ENCODE measurements at regions of chr22 and their contacts with region 1.

Region 1: GRCh38 chr22:43884600-43885325 is 7.0 kb downstream of the PNPLA5 start:
- DNase-seq: no peak
- ATAC-seq: peak; percentile 79
- H3K4me3 ChIP-seq: no peak overlapping the region
- H3K27ac ChIP-seq: no peak overlapping the region
- H3K4me1 ChIP-seq: peaks cover 0 to 7% of the 10 kb centered on the region in 2 experiments; a peak in 1 of 4 replicates
- H3K27me3 ChIP-seq: no peaks in the 10 kb centered on the region
- CTCF ChIP-seq: peak; percentile 47 to 97 (median 85); a peak in 5 of 6 replicates
- POLR2A ChIP-seq: no peak
- RAD21 ChIP-seq: peak; percentile 51

Region 2: DNA sequence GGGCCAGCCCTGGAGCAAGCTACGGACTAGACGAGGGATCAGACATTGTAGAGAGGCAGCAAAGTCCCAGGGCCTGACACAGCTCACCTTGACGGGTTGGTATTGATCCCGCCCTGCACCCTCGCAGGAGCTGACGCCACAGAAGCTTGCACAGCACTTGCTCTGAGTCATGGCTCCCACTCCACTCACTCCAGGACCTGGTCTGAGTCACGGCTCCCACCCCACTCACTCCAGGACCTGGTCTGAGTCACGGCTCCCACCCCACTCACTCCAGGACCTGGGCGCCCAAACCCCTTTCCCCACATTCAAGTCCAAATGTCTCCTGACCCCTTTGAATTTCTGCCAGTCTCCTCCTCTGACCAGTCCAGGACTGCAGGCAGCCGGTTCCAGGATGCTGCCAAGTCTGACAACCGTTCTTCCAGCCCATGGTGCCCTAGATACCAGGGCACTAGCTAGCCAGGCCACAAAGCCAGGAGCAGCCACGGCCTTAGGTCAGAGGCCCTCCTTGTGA is 13.0 kb after region 1 on chr22:
- CTCF ChIA-PET with region 1: interaction called, 34 read pairs
- POLR2A ChIA-PET with region 1: interaction called, 6 read pairs
- RAD21 ChIA-PET with region 1: no interaction called
- intact Hi-C with region 1: no loop called
- DNase-seq: no peak
- ATAC-seq: peak; percentile 74
- H3K4me3 ChIP-seq: no peak overlapping the region
- H3K27ac ChIP-seq: no peak overlapping the region
- H3K4me1 ChIP-seq: peaks cover 2 to 12% of the 10 kb centered on the region in 2 experiments; a peak in 3 of 4 replicates
- H3K27me3 ChIP-seq: no peaks in the 10 kb centered on the region
- CTCF ChIP-seq: no peak
- POLR2A ChIP-seq: no peak
- RAD21 ChIP-seq: no peak

Region 3: GRCh38 chr22:43945632-43946383 is 61.0 kb after region 1 on chr22:
- CTCF ChIA-PET with region 1: interaction called, 64 read pairs
- POLR2A ChIA-PET with region 1: interaction called, 4 read pairs
- RAD21 ChIA-PET with region 1: interaction called, 9 to 14 read pairs
- intact Hi-C with region 1: loop called (anchors 1 kb)
- DNase-seq: peak; percentile 41
- ATAC-seq: peak; percentile 99
- H3K4me3 ChIP-seq: no peak overlapping the region
- H3K27ac ChIP-seq: no peak overlapping the region
- H3K4me1 ChIP-seq: peaks cover 0 to 7% of the 10 kb centered on the region in 2 experiments; a peak in 2 of 4 replicates
- H3K27me3 ChIP-seq: no peaks in the 10 kb centered on the region
- CTCF ChIP-seq: peak; percentile 62 to 85 (median 82); a peak in 5 of 6 replicates
- POLR2A ChIP-seq: no peak
- RAD21 ChIP-seq: peak; percentile 57

Region 4: GRCh38 chr22:43993027-43993760 is 108.4 kb after region 1 on chr22:
- CTCF ChIA-PET with region 1: interaction called, 14 read pairs
- POLR2A ChIA-PET with region 1: no interaction called
- RAD21 ChIA-PET with region 1: no interaction called
- intact Hi-C with region 1: no loop called
- DNase-seq: peak; percentile 21
- ATAC-seq: peak; percentile 94
- H3K4me3 ChIP-seq: no peak overlapping the region
- H3K27ac ChIP-seq: 0 out of 2 replicates have a peak overlapping the region, but pooled peaks have one; percentile 29
- H3K4me1 ChIP-seq: no peaks in the 10 kb centered on the region
- H3K27me3 ChIP-seq: no peaks in the 10 kb centered on the region
- CTCF ChIP-seq: peak; percentile 68 to 99 (median 94)
- POLR2A ChIP-seq: no peak
- RAD21 ChIP-seq: peak; percentile 79

Region 5: GRCh38 chr22:44080936-44081861 is 196.4 kb after region 1 on chr22:
- CTCF ChIA-PET with region 1: interaction called, 13 read pairs
- POLR2A ChIA-PET with region 1: no interaction called
- RAD21 ChIA-PET with region 1: no interaction called
- intact Hi-C with region 1: loop called (anchors 10 kb)
- DNase-seq: peak; percentile 29
- ATAC-seq: peak; percentile 77
- H3K4me3 ChIP-seq: no peak overlapping the region
- H3K27ac ChIP-seq: no peak overlapping the region
- H3K4me1 ChIP-seq: no peaks in the 10 kb centered on the region; a peak in 1 of 4 replicates
- H3K27me3 ChIP-seq: no peaks in the 10 kb centered on the region
- CTCF ChIP-seq: peak; percentile 46 to 93 (median 91); a peak in 5 of 6 replicates
- POLR2A ChIP-seq: no peak
- RAD21 ChIP-seq: peak; percentile 66

Region 6: GRCh38 chr22:44625981-44626687 is 741.4 kb after region 1 on chr22:
- CTCF ChIA-PET with region 1: interaction called, 8 read pairs
- POLR2A ChIA-PET with region 1: no interaction called
- RAD21 ChIA-PET with region 1: interaction called in 1 of 2 experiments, 3 read pairs
- intact Hi-C with region 1: loop called (anchors 10 kb)
- DNase-seq: peak; percentile 38
- ATAC-seq: peak; percentile 81
- H3K4me3 ChIP-seq: no peak overlapping the region
- H3K27ac ChIP-seq: no peak overlapping the region
- H3K4me1 ChIP-seq: peaks cover 0 to 4% of the 10 kb centered on the region in 2 experiments; a peak in 1 of 4 replicates
- H3K27me3 ChIP-seq: no peaks in the 10 kb centered on the region
- CTCF ChIP-seq: peak; percentile 88 to 98 (median 94)
- POLR2A ChIP-seq: no peak
- RAD21 ChIP-seq: peak; percentile 92